ENCODE measurements at regions of chr11 and their contacts with region 1.

Region 1: GRCh38 chr11:128522055-128522942 is 65.1 kb downstream of the ETS1 start:
- DNase-seq: peak; percentile 88
- ATAC-seq: peak; percentile 89
- H3K4me3 Mint-ChIP-seq: peak overlapping the region; percentile 99
- H3K27ac Mint-ChIP-seq: peak overlapping the region; percentile 97
- H3K4me1 Mint-ChIP-seq: peaks cover 56% of the 10 kb centered on the region
- H3K27me3 Mint-ChIP-seq: no peaks in the 10 kb centered on the region
- CTCF ChIP-seq: no peak

Region 2: GRCh38 chr11:128005562-128005961 is 516.7 kb before region 1 on chr11:
- CTCF ChIA-PET with region 1: no interaction called
- POLR2A ChIA-PET with region 1: no interaction called
- intact Hi-C with region 1: no loop called
- DNase-seq: no peak
- ATAC-seq: no peak
- H3K4me3 Mint-ChIP-seq: no peak overlapping the region
- H3K27ac Mint-ChIP-seq: no peak overlapping the region
- H3K4me1 Mint-ChIP-seq: no peaks in the 10 kb centered on the region
- H3K27me3 Mint-ChIP-seq: peaks cover 25% of the 10 kb centered on the region
- CTCF ChIP-seq: no peak

Region 3: GRCh38 chr11:128195057-128195751 is 327.1 kb before region 1 on chr11:
- CTCF ChIA-PET with region 1: no interaction called
- POLR2A ChIA-PET with region 1: no interaction called
- intact Hi-C with region 1: loop called (anchors 5 kb)
- DNase-seq: no peak
- ATAC-seq: peak; percentile 84
- H3K4me3 Mint-ChIP-seq: peak overlapping the region; percentile 16
- H3K27ac Mint-ChIP-seq: peak overlapping the region; percentile 22
- H3K4me1 Mint-ChIP-seq: peaks cover 18% of the 10 kb centered on the region
- H3K27me3 Mint-ChIP-seq: no peaks in the 10 kb centered on the region
- CTCF ChIP-seq: no peak

Region 4: GRCh38 chr11:128399251-128400121 is 122.8 kb before region 1 on chr11:
- CTCF ChIA-PET with region 1: no interaction called
- POLR2A ChIA-PET with region 1: no interaction called
- intact Hi-C with region 1: loop called (anchors 1 kb)
- DNase-seq: no peak
- ATAC-seq: peak; percentile 81
- H3K4me3 Mint-ChIP-seq: peak overlapping the region; percentile 40
- H3K27ac Mint-ChIP-seq: peak overlapping the region; percentile 91
- H3K4me1 Mint-ChIP-seq: peaks cover 29% of the 10 kb centered on the region
- H3K27me3 Mint-ChIP-seq: no peaks in the 10 kb centered on the region
- CTCF ChIP-seq: no peak

Region 5: DNA sequence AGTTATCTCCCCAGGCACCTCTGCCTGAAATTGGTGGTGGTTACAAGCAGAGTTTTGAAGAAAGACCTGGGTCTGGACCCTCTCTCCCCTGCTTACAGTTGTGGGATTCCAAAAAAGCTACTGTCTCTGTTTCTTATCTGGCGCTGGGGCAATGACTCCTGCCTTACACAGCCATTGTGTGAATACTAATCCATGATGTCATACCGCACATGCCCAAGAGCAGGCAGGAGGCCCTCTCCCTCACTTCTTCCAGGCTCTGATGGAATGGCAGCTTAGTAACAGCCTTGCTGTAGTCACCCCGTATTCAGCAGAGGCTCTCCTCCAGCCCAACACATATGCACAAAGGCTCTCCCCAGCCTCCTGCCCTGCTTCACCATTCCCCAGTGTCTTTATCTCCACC is 100.7 kb before region 1 on chr11:
- CTCF ChIA-PET with region 1: no interaction called
- POLR2A ChIA-PET with region 1: no interaction called
- intact Hi-C with region 1: no loop called
- DNase-seq: no peak
- ATAC-seq: no peak
- H3K4me3 Mint-ChIP-seq: no peak overlapping the region
- H3K27ac Mint-ChIP-seq: peak overlapping the region; percentile 7
- H3K4me1 Mint-ChIP-seq: peaks cover 28% of the 10 kb centered on the region
- H3K27me3 Mint-ChIP-seq: no peaks in the 10 kb centered on the region
- CTCF ChIP-seq: no peak

Region 6: DNA sequence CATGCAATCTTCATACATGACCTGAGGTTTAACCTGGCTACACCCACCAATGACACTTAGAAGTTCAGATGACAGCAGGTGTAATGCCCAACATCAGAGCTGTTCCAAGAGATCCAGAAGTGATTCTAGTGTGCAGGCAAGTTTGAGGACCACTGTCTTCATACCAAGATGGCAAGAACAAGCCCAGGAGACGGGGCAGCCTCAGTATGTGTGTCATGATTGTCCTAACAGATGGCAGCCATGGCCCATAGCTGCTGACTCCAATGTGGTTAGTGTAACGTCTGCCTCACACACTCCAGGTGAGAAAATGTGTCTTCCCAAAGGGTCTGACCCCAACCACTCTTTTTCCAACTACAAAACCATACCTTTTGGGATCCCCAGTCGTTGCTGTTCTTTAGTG is 32.2 kb before region 1 on chr11:
- CTCF ChIA-PET with region 1: interaction called, 4 read pairs
- POLR2A ChIA-PET with region 1: interaction called, 42 read pairs
- intact Hi-C with region 1: no loop called
- DNase-seq: no peak
- ATAC-seq: no peak
- H3K4me3 Mint-ChIP-seq: no peak overlapping the region
- H3K27ac Mint-ChIP-seq: peak overlapping the region; percentile 77
- H3K4me1 Mint-ChIP-seq: peaks cover 83% of the 10 kb centered on the region
- H3K27me3 Mint-ChIP-seq: no peaks in the 10 kb centered on the region
- CTCF ChIP-seq: no peak

Region 7: GRCh38 chr11:128552783-128553661 is 30.7 kb after region 1 on chr11:
- CTCF ChIA-PET with region 1: interaction called, 24 read pairs
- POLR2A ChIA-PET with region 1: interaction called, 146 read pairs
- intact Hi-C with region 1: loop called (anchors 1 kb)
- DNase-seq: peak; percentile 47
- ATAC-seq: peak; percentile 78
- H3K4me3 Mint-ChIP-seq: peak overlapping the region; percentile 73
- H3K27ac Mint-ChIP-seq: peak overlapping the region; percentile 98
- H3K4me1 Mint-ChIP-seq: peaks cover 72% of the 10 kb centered on the region
- H3K27me3 Mint-ChIP-seq: no peaks in the 10 kb centered on the region
- CTCF ChIP-seq: no peak

Region 8: DNA sequence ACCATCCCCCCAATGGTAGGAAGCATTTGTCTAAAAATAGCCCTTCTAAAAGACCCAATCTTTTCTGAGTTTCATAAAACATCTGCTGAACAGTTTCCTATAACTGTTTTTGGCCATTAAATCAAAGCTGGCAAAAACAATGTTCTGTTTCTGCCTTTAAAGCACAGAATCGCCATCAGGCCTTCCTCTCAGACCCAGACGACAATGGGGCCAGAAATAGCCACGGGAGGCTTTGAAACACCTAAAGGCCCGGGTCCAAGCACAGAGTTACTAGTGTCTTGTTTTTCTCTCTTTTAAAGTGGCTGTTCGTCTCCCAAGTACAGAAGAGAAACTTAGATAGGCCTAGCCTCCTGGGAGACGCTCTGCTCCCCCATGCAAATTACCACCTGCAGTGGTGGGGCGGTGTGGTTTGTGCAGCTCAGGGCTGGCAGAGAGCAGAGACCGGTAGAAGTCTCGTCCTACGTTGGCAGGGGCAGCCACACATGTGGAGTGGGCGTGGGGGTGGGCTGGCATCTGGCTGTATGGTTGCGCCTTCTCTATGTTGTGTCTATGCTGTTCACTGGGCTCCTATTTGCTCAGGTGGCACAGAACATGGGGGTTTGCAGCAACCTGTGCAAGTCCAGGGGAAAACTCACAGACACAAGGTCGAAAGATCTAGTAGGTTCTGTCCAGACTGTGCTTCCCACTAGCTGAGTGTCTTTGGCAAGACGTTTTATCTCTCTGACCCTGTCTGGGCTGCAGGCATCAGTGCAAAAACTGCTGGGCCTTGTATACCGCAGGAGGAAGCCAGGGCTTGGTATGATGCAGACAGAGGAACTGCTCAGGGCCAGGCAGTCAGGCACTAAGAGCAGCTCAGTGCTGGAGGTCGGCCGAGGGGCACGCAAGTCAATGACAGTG is 88.7 kb after region 1 on chr11:
- CTCF ChIA-PET with region 1: interaction called, 4 read pairs
- POLR2A ChIA-PET with region 1: interaction called, 101 read pairs
- intact Hi-C with region 1: loop called (anchors 1 kb)
- DNase-seq: peak; percentile 79
- ATAC-seq: peak; percentile 87
- H3K4me3 Mint-ChIP-seq: peak overlapping the region; percentile 79
- H3K27ac Mint-ChIP-seq: peak overlapping the region; percentile 94
- H3K4me1 Mint-ChIP-seq: peaks cover 93% of the 10 kb centered on the region
- H3K27me3 Mint-ChIP-seq: no peaks in the 10 kb centered on the region
- CTCF ChIP-seq: no peak

Region 9: GRCh38 chr11:128831174-128832120 is 309.1 kb after region 1 on chr11:
- CTCF ChIA-PET with region 1: interaction called, 4 read pairs
- POLR2A ChIA-PET with region 1: no interaction called
- intact Hi-C with region 1: loop called (anchors 5 kb)
- DNase-seq: peak; percentile 75
- ATAC-seq: peak; percentile 92
- H3K4me3 Mint-ChIP-seq: peak overlapping the region; percentile 70
- H3K27ac Mint-ChIP-seq: peak overlapping the region; percentile 91
- H3K4me1 Mint-ChIP-seq: peaks cover 80% of the 10 kb centered on the region
- H3K27me3 Mint-ChIP-seq: no peaks in the 10 kb centered on the region
- CTCF ChIP-seq: no peak

Region 10: DNA sequence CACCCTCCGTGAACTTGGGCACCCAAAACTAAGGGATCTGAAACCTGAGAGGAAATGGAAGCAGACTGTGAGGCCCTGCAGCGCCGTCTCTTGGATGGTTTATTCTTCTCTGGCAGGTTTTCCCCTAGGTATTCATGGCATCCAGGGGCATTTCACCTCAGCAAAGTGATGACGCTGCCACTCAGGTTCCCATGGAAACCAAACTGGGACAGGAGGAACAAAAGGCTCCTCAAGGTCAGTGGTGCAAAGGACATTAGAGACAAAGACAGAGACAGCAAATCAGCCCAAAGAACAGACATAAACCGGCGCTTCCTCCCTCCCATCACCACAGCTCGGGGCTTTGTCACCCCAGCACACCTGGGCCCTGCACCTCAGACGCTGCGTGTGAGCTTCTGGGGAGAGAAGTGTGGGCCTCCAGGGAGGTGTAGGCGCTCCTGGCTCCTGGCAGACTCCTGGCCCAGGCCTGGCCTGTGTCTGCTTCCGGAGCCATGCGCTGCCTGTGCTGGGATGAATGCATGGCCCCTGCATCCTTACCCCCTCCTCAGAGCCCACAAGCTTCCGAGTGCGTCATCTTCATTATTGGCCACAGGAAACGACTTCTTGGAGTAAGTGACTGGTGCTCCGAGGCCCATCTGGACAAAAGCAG is 414.4 kb after region 1 on chr11:
- CTCF ChIA-PET with region 1: no interaction called
- POLR2A ChIA-PET with region 1: no interaction called
- intact Hi-C with region 1: no loop called
- DNase-seq: no peak
- ATAC-seq: no peak
- H3K4me3 Mint-ChIP-seq: no peak overlapping the region
- H3K27ac Mint-ChIP-seq: no peak overlapping the region
- H3K4me1 Mint-ChIP-seq: no peaks in the 10 kb centered on the region
- H3K27me3 Mint-ChIP-seq: peaks cover 5% of the 10 kb centered on the region
- CTCF ChIP-seq: no peak

Measured in activated B cell treated with CpG ODN at 0.5 μM for 24 hours (primary cell).